SK-N-SH (cell line): ENCODE measurements at regions of chr1 and their contacts with region 1.

Region 1: GRCh38 chr1:171313835-171314320 is at the start of gene FMO4:
- DNase-seq: peak; percentile 59
- H3K4me3 ChIP-seq: peak within 1 kb of the TSS; percentile 37 to 52; a peak in 3 of 4 replicates
- H3K27ac ChIP-seq: peak within 1 kb of the TSS; percentile 22 to 48; a peak in 2 of 4 replicates
- H3K4me1 ChIP-seq: no peaks in the 10 kb centered on the region; a peak in 1 of 4 replicates
- H3K27me3 ChIP-seq: no peaks in the 10 kb centered on the region; the same call in 1 of the 2 replicates
- CTCF ChIP-seq: peak; percentile 94
- EP300 ChIP-seq: no peak
- RAD21 ChIP-seq: peak; percentile 74
- polyA plus RNA-seq, gene FMO4: 1.6 and 2.0 TPM in 2 replicates

Region 2: GRCh38 chr1:170967042-170967910 is 346.6 kb before region 1 on chr1:
- CTCF ChIA-PET with region 1: interaction called, 29 read pairs
- POLR2A ChIA-PET with region 1: no interaction called
- DNase-seq: peak; percentile 12
- H3K4me3 ChIP-seq: no peak overlapping the region
- H3K27ac ChIP-seq: no peak overlapping the region
- H3K4me1 ChIP-seq: peaks cover 0 to 4% of the 10 kb centered on the region in 2 experiments; a peak in 2 of 4 replicates
- H3K27me3 ChIP-seq: no peaks in the 10 kb centered on the region
- CTCF ChIP-seq: peak; percentile 76
- EP300 ChIP-seq: no peak
- RAD21 ChIP-seq: peak; percentile 57

Region 3: GRCh38 chr1:171081314-171081753 is 232.5 kb before region 1 on chr1:
- CTCF ChIA-PET with region 1: interaction called, 11 read pairs
- POLR2A ChIA-PET with region 1: no interaction called
- DNase-seq: peak; percentile 1
- H3K4me3 ChIP-seq: no peak overlapping the region
- H3K27ac ChIP-seq: no peak overlapping the region
- H3K4me1 ChIP-seq: no peaks in the 10 kb centered on the region
- H3K27me3 ChIP-seq: no peaks in the 10 kb centered on the region
- CTCF ChIP-seq: peak; percentile 60
- EP300 ChIP-seq: no peak
- RAD21 ChIP-seq: peak; percentile 46

Region 4: GRCh38 chr1:171245458-171246064 is 68.3 kb before region 1 on chr1:
- CTCF ChIA-PET with region 1: interaction called, 21 read pairs
- POLR2A ChIA-PET with region 1: no interaction called
- DNase-seq: peak; percentile 37
- H3K4me3 ChIP-seq: no peak overlapping the region
- H3K27ac ChIP-seq: no peak overlapping the region
- H3K4me1 ChIP-seq: no peaks in the 10 kb centered on the region
- H3K27me3 ChIP-seq: peaks cover 29% of the 10 kb centered on the region; the same call in 1 of the 2 replicates
- CTCF ChIP-seq: peak; percentile 80
- EP300 ChIP-seq: no peak
- RAD21 ChIP-seq: peak; percentile 48